Activated CD4-positive, alpha-beta memory T cell treated with anti-CD3 and anti-CD28 coated beads, Interleukin-2, amount 10 ng/mL, durations not matched to agents 7 days and 5 days (primary cell): ENCODE measurements at regions of chr4 and their contacts with region 1.

Region 1: GRCh38 chr4:40672536-40673526 is 43.2 kb upstream of the RBM47 start:
- DNase-seq: peak; percentile 70
- H3K4me3 Mint-ChIP-seq: peak overlapping the region; percentile 62
- H3K27ac Mint-ChIP-seq: peak overlapping the region; percentile 95
- H3K4me1 Mint-ChIP-seq: peaks cover 62% of the 10 kb centered on the region
- H3K27me3 Mint-ChIP-seq: no peaks in the 10 kb centered on the region

Region 2: GRCh38 chr4:40587823-40588222 is 85.0 kb before region 1 on chr4:
- CTCF ChIA-PET with region 1: no interaction called
- POLR2A ChIA-PET with region 1: no interaction called
- DNase-seq: no peak
- H3K4me3 Mint-ChIP-seq: no peak overlapping the region
- H3K27ac Mint-ChIP-seq: no peak overlapping the region
- H3K4me1 Mint-ChIP-seq: no peaks in the 10 kb centered on the region
- H3K27me3 Mint-ChIP-seq: peaks cover 13% of the 10 kb centered on the region

Region 3: DNA sequence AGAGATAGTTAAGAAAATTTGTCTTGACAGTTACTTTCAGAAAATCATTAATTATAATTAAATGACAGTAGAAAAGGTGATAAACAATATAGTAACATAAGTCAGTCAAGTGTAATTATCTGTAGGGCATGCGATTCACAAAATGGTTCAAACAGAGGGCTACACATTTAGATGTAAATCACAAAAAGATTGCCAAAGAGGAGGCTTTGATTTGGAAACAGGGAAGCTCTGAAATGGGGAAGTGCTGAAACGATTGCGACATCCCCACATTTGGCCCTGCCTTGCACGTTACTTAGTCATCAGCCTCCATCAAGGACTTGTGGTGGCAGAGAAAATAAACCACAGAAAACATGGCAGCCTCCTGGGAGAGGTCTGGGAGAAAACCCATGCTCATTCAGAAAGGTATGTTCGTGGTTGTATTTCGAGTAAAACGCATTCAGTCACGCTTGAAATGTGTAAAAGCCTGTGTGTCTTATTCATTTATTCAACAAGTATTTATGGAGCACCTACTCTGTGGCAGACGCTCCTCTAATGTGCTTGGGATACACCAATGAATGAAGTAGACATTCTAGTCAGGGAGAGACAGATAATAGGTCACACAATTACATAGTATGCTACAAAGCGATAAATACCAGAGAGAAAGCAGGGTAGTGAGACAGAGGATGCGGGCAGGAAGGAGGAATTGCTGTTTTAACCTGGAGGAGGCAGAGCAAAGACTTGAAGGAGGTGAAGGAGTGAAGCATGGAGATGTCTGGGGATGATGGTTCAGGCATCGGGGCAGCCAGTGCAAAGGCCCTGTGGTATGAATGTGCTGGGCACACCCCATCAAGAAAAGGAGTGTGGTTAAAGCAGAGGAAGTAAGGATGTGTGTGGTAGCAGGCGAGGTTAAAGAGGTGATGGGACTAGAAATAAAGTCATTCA is 51.0 kb before region 1 on chr4:
- CTCF ChIA-PET with region 1: interaction called, 5 read pairs
- POLR2A ChIA-PET with region 1: interaction called, 10 read pairs
- DNase-seq: peak; percentile 43
- H3K4me3 Mint-ChIP-seq: no peak overlapping the region
- H3K27ac Mint-ChIP-seq: peak overlapping the region; percentile 44
- H3K4me1 Mint-ChIP-seq: peaks cover 45% of the 10 kb centered on the region
- H3K27me3 Mint-ChIP-seq: peaks cover 21% of the 10 kb centered on the region